Calu3 (cell line): ENCODE measurements at regions of chr5 and their contacts with region 1.

Region 1: GRCh38 chr5:151651997-151652645 is 34.6 kb downstream of the SPARC start:
- DNase-seq: peak; percentile 87
- H3K4me3 Mint-ChIP-seq: no peak overlapping the region
- H3K27ac Mint-ChIP-seq: no peak overlapping the region
- H3K4me1 Mint-ChIP-seq: peaks cover 7% of the 10 kb centered on the region
- H3K27me3 Mint-ChIP-seq: peaks cover 38% of the 10 kb centered on the region
- CTCF ChIP-seq: peak; percentile 85

Region 2: DNA sequence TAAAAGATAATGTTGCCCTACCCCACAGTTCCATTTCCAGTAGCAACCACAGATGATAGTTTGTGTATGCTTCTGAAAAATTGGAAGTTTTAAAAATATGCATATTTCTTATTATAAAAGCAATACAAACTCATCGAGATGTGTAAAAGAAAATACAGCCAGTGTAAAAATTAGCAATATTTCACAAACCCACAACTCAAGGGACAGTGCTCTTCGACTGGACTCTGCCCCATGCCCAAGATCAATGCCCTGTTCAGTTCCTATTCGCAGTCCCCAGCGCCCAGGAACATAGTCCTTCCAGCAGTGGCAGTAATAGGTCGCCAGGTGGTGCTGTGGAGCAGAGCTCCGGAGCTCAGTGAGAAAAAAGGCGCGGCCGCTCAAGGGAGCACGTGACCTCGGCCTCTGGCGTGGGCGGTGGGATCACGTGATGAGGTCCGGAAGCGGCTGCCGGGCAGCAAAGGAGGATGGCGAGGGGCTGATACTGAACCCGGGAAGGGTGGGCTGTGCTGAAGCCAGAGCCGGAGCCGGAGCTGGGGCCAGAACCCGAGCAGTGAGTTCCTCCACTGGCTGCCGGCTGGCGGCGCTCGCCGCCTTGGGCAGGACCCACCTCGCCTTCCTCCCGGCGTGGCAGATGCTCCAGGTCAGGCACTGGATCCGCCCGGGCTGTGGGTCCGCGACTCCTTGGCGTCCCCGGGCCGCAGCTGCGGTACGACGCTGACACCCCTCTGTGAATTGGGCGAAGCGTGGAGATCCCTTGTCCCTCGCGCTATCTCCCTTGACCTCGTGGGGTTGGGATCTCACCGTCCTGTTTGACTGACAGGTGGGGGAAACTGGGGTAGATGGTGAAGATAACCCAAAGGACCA is 204.7 kb before region 1 on chr5 and contains the start of gene SLC36A1:
- CTCF ChIA-PET with region 1: interaction called, 65 read pairs
- intact Hi-C with region 1: loop called (anchors 1 kb)
- DNase-seq: peak; percentile 96
- H3K4me3 Mint-ChIP-seq: peak within 1 kb of the TSS; percentile 84
- H3K27ac Mint-ChIP-seq: peak within 1 kb of the TSS; percentile 84
- H3K4me1 Mint-ChIP-seq: peaks cover 26% of the 10 kb centered on the region
- H3K27me3 Mint-ChIP-seq: peaks cover 24% of the 10 kb centered on the region
- CTCF ChIP-seq: peak; percentile 96
- total RNA-seq, gene SLC36A1: 11.4 and 12.3 TPM in 2 replicates

Region 3: DNA sequence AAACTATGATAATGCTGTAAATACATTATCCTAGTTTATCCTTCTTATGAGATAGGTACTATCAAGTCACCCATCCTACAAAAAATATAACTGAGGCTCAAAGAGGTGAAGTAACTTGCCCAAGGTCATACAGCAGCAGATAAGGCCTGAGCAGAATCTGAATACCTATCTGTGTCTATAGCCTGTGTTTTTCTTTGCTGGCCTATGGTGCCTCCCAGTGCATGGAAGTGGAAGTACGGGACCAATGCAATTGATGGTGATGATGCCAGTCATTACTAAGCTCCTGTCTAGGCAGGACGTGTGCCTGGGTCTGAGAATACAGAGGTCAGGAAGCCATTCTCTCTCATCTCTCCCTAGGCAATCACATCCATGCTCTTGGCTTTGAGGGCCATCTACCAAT is 128.8 kb before region 1 on chr5:
- CTCF ChIA-PET with region 1: interaction called, 32 read pairs
- intact Hi-C with region 1: loop called (anchors 1 kb)
- DNase-seq: peak; percentile 48
- H3K4me3 Mint-ChIP-seq: no peak overlapping the region
- H3K27ac Mint-ChIP-seq: no peak overlapping the region
- H3K4me1 Mint-ChIP-seq: no peaks in the 10 kb centered on the region
- H3K27me3 Mint-ChIP-seq: peaks cover 39% of the 10 kb centered on the region
- CTCF ChIP-seq: peak; percentile 63

Region 4: DNA sequence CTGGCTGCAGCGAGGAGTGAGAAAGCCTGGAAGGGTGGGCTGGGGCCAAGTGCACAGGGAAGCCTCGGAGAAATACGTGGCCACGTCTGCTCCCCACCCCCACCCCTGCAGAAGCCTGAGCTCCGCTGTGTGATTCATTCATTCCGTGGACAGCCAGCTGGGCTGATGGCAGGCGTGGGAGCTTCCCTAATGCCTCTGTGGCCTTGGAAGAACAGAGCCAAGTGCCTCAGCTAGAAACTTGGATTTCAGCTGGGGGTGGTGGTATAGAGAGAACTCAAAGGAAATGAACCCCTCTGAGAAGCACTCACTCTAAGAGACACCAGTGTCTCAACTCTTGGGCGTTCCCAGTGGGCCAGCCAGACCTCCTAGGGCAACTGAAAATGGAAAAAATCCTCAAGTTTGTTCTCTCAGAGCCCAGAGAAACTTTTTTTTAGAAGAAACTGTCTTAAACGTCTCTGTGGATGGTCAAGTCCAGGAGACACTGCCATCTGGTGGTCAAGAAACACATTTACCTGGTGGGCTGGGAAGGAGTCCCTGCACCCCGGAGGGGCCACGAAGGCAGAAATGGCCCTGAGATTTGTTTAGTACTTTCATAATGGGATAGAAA is 88.3 kb after region 1 on chr5:
- CTCF ChIA-PET with region 1: interaction called, 18 read pairs
- intact Hi-C with region 1: no loop called
- DNase-seq: peak; percentile 74
- H3K4me3 Mint-ChIP-seq: peak overlapping the region; percentile 18
- H3K27ac Mint-ChIP-seq: peak overlapping the region; percentile 60
- H3K4me1 Mint-ChIP-seq: peaks cover 56% of the 10 kb centered on the region
- H3K27me3 Mint-ChIP-seq: no peaks in the 10 kb centered on the region
- CTCF ChIP-seq: peak; percentile 88